ENCODE measurements at regions of chr15 and their contacts with region 1.

Region 1: GRCh38 chr15:63048115-63048775 is 5.7 kb downstream of the TPM1 start:
- DNase-seq: peak; percentile 91 to 98 (median 94)
- ATAC-seq: peak; percentile 83 to 90 (median 89)
- H3K4me3 ChIP-seq: peak overlapping the region; percentile 59 to 99 (median 88)
- H3K27ac ChIP-seq: peak overlapping the region; percentile 87 to 93 (median 93)
- H3K4me1 ChIP-seq: peaks cover 9 to 41% (median 30%) of the 10 kb centered on the region in 3 donors
- H3K27me3 ChIP-seq: no peaks in the 10 kb centered on the region
- CTCF ChIP-seq: peak; percentile 85 to 96 (median 88)

Region 2: DNA sequence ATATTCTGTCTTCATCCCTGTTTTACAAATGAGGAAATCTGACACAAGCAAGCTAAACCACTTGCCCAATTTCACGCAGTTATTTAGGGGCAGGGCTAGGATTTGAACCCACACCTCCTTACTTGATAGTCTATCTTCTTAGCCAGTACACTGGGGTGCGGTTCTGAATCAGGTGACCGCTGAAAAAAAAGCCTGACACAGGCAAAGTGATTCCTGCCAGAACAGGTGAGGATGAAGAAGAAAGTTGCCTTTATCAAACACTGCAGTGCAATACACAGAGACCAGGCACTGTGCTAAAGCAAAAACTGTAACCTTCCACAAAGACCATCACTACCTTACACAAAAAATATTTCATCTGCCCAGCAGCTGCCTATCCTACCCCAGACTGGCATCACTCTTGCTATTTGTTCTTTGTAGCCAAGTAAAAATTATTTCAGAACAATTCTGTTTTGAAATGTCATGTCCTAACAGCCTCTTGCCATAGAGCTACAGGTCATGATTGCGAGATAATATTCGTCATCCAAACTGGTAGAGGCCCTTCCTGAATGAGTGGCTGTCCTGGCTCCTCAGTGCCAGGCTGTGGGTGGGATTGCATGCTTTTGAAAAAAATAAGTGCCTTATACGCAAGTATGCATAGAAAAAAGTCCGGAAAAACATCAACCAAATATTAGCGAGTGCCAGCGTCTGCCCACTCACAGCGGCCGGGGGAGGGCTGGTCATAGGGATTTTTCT is 148.0 kb before region 1 on chr15:
- intact Hi-C with region 1: loop called in 1 of 3 experiments (anchors 10 kb)
- DNase-seq: no peak
- ATAC-seq: no peak
- H3K4me3 ChIP-seq: no peak overlapping the region
- H3K27ac ChIP-seq: no peak overlapping the region
- H3K4me1 ChIP-seq: peaks cover 16 to 34% (median 23%) of the 10 kb centered on the region in 3 donors
- H3K27me3 ChIP-seq: no peaks in the 10 kb centered on the region
- CTCF ChIP-seq: no peak

Region 3: GRCh38 chr15:62977952-62978811 is 70.1 kb before region 1 on chr15:
- intact Hi-C with region 1: no loop called
- DNase-seq: no peak
- ATAC-seq: no peak
- H3K4me3 ChIP-seq: no peak overlapping the region
- H3K27ac ChIP-seq: peak overlapping the region in 3 of 4 donors; percentile 11 to 34 (median 22)
- H3K4me1 ChIP-seq: no peaks in the 10 kb centered on the region
- H3K27me3 ChIP-seq: no peaks in the 10 kb centered on the region
- CTCF ChIP-seq: no peak

Region 4: GRCh38 chr15:63122002-63122893 is 74.0 kb after region 1 on chr15:
- intact Hi-C with region 1: no loop called
- DNase-seq: peak; percentile 76 to 95 (median 88)
- ATAC-seq: peak; percentile 96 to 99 (median 96)
- H3K4me3 ChIP-seq: peak overlapping the region; percentile 75 to 99 (median 96)
- H3K27ac ChIP-seq: peak overlapping the region; percentile 67 to 94 (median 88)
- H3K4me1 ChIP-seq: no peaks in the 10 kb centered on the region
- H3K27me3 ChIP-seq: no peaks in the 10 kb centered on the region
- CTCF ChIP-seq: no peak

Region 5: DNA sequence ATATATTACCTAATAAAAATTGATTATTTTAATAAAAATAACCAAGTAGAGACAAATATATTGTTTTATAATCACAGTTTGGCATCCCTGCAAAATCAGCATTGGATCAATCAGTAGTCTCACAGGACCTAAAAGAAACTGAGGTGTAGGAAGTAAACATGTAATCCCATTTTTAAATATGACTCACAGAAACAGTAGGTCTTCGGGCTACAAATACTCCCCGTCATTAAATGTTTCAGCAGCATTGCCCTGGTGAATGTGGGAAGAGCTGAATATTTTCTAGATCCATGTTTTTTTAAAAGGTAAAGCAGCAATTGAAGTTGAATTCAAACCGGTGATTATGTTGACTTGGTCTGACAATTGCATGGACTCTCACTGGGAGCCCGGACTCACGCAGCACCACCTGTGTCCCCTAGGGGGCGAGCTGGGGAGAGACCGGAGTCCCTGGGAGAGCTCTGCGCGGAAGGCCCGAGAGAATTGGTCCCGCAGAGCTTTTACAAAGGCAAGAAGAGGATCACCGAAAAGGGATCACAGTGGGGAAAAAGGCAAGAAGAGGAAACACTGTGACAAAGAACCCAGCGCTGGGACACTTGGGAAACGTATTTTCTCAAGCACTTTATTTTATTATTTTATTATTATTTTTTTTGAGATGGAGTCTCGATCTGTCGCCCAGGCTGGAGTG is 439.0 kb after region 1 on chr15:
- intact Hi-C with region 1: no loop called
- DNase-seq: peak; percentile 83 to 99 (median 91)
- ATAC-seq: peak; percentile 96 to 99 (median 98)
- H3K4me3 ChIP-seq: no peak overlapping the region
- H3K27ac ChIP-seq: no peak overlapping the region
- H3K4me1 ChIP-seq: peaks cover 0 to 5% (median 0%) of the 10 kb centered on the region in 3 donors
- H3K27me3 ChIP-seq: no peaks in the 10 kb centered on the region
- CTCF ChIP-seq: peak; percentile 89 to 93 (median 90)